Activated T-helper 2 cell treated with anti-CD3 and anti-CD28 coated beads, Interferon-gamma antibody, Interleukin-2, Interleukin-4, amounts not matched to agents 10 μg/mL and 5 μg/mL and 100 μg/mL, durations not matched to agents 14 hours and 24 hours and 36 hours (primary cell): ENCODE measurements at regions of chr9 and their contacts with region 1.

Region 1: GRCh38 chr9:72364679-72365524 is at the start of gene ZFAND5:
- DNase-seq: peak; percentile 86
- H3K4me3 Mint-ChIP-seq: peak within 1 kb of the TSS; percentile 90
- H3K27ac Mint-ChIP-seq: peak within 1 kb of the TSS; percentile 92
- H3K4me1 Mint-ChIP-seq: peaks cover 29% of the 10 kb centered on the region
- H3K27me3 Mint-ChIP-seq: no peaks in the 10 kb centered on the region
- total RNA-seq, gene ZFAND5: 95.5 and 99.1 TPM in 2 replicates

Region 2: DNA sequence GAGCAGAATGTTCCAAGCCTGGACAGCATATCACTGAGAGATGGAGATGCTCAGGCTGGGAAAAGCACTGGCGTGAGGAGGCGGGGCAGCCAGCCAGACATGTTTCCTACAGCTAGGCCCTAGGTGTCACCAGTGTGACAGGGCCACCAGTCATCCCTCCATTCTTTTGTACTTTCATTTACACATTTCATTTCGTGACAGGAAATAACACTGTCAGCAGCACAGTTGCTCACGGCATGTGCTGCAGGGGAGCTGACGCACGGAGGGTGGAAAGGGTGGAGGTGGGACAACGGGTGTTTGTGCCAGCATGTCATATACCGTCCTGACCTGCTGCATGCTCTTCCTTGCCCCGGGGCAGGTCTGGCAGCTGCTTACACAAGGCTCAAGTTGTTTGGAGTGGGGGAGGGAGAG is 581.8 kb before region 1 on chr9:
- intact Hi-C with region 1: loop called (anchors 5 kb)
- DNase-seq: peak; percentile 81
- H3K4me3 Mint-ChIP-seq: peak overlapping the region; percentile 70
- H3K27ac Mint-ChIP-seq: peak overlapping the region; percentile 99
- H3K4me1 Mint-ChIP-seq: peaks cover 48% of the 10 kb centered on the region
- H3K27me3 Mint-ChIP-seq: no peaks in the 10 kb centered on the region

Region 3: GRCh38 chr9:72349240-72349639 is 15.7 kb before region 1 on chr9:
- intact Hi-C with region 1: loop called (anchors 2 kb)
- DNase-seq: no peak
- H3K4me3 Mint-ChIP-seq: no peak overlapping the region
- H3K27ac Mint-ChIP-seq: no peak overlapping the region
- H3K4me1 Mint-ChIP-seq: peaks cover 18% of the 10 kb centered on the region
- H3K27me3 Mint-ChIP-seq: peaks cover 4% of the 10 kb centered on the region

Region 4: GRCh38 chr9:72396247-72397091 is 31.6 kb after region 1 on chr9:
- intact Hi-C with region 1: no loop called
- DNase-seq: no peak
- H3K4me3 Mint-ChIP-seq: no peak overlapping the region
- H3K27ac Mint-ChIP-seq: no peak overlapping the region
- H3K4me1 Mint-ChIP-seq: peaks cover under 1% of the 10 kb centered on the region
- H3K27me3 Mint-ChIP-seq: peaks cover 18% of the 10 kb centered on the region

Region 5: DNA sequence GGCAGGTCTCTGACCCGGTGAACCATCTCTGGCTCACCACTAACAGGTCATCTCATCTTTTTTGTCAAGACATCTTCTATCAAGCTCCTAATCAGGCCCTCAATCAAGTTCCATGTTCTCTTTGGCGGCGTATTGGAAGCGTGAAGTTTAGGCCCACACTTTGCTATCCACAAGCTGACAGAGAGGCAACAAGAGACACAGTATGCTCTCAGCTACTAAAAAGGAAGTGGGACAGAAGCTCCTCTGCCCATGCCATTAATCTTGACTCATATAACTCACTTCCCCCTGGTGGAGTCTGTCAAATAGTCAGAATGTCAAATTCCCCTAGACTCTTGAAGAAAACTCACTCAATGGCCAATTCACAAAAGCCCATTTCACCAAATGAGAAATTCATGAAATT is 79.0 kb after region 1 on chr9:
- intact Hi-C with region 1: loop called (anchors 1 kb)
- DNase-seq: peak; percentile 14
- H3K4me3 Mint-ChIP-seq: no peak overlapping the region
- H3K27ac Mint-ChIP-seq: peak overlapping the region; percentile 68
- H3K4me1 Mint-ChIP-seq: peaks cover 33% of the 10 kb centered on the region
- H3K27me3 Mint-ChIP-seq: peaks cover 12% of the 10 kb centered on the region

Region 6: GRCh38 chr9:72526901-72527800 is 162.2 kb after region 1 on chr9:
- intact Hi-C with region 1: loop called (anchors 2 kb)
- DNase-seq: peak; percentile 61
- H3K4me3 Mint-ChIP-seq: peak overlapping the region; percentile 72
- H3K27ac Mint-ChIP-seq: peak overlapping the region; percentile 94
- H3K4me1 Mint-ChIP-seq: peaks cover 43% of the 10 kb centered on the region
- H3K27me3 Mint-ChIP-seq: no peaks in the 10 kb centered on the region

Region 7: GRCh38 chr9:73132034-73132776 is 767.3 kb after region 1 on chr9:
- intact Hi-C with region 1: loop called (anchors 5 kb)
- DNase-seq: peak; percentile 71
- H3K4me3 Mint-ChIP-seq: peak overlapping the region; percentile 85
- H3K27ac Mint-ChIP-seq: peak overlapping the region; percentile 97
- H3K4me1 Mint-ChIP-seq: peaks cover 36% of the 10 kb centered on the region
- H3K27me3 Mint-ChIP-seq: no peaks in the 10 kb centered on the region